Ovary (tissue), 10 donors: ENCODE measurements at regions of chr2 and their contacts with region 1.

Region 1: DNA sequence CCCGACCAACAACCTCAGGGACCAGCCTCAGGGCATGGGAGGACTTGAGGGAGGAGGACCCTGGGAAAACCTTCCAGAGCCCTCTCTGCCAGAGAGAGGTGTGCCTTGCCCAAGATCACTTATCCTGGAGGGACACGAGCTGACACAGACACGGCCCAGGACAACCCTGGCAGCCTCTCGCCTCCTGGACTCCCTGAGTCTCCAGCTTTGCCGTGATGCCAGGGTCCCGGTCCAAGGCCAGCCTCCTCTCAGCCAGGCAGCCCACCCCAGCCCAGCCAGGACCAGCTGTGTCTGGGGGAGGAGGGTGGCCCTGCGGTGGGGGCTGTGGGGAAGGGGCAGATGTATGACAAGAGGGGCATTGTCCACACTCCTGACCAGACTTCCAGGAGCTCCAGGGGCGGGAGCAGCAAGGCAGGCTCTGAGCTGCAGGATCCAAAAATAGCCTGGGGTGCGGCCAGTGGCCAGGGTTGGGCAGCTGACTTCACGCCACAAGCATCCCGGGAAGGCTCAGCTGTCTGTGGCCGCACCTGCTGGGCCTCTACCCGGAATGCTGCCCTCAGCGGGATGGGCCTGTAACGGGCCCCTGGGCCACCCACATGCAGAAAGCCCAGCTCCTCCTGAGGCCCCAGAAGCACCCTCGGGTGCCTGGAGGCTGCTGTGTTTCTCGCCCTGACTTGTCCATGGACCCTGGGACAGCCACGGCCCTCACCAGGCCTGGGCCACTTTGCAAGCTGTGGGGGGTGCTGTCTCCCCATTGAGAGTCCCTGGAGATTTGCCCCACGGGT is 65.5 kb upstream of the GPC1 start:
- DNase-seq: peak; percentile 65 to 82 (median 69)
- H3K4me3 ChIP-seq: no peak overlapping the region
- H3K27ac ChIP-seq: peak overlapping the region; percentile 22 to 62
- H3K4me1 ChIP-seq: peaks cover 17% of the 10 kb centered on the region
- H3K27me3 ChIP-seq: no peaks in the 10 kb centered on the region
- CTCF ChIP-seq: no peak
- EP300 ChIP-seq: no peak
- POLR2A ChIP-seq: no peak

Region 2: DNA sequence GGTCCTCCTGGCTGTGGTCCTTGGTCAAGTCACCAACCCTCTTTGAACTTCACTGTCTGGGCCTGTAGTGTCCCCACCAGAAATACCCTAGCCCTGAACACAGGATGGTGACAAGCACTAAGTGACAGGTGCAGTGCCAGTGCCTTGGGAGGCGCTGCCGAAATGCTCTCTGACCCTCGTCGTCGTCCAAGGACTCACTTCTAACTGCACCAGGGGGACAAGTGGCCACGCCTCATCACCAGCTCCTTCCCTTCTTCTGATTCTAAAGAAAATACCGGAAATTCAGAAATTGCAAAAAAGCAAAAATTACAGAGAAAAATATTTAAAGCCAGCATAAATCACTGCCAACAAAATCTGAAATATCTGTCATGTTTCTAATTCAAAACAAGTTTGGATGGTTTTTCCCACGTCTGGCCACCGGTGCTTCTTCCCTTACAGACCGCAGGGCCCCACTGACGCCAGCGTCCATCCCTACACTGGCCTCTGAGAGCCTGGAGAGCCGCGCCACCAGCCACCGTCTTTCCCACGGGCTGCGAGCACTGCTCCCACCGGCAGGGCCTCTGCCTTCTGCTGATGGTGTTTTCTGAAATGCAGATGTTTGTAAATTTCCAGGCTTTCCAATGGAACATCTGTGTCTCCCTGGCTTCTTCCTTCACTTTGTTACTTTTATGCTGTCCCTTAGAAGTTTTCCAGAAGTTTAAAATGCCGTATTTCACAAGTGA is 28.1 kb after region 1 on chr2:
- intact Hi-C with region 1: no loop called
- DNase-seq: peak in 3 of 5 donors; percentile 14 to 41 (median 19)
- H3K4me3 ChIP-seq: no peak overlapping the region
- H3K27ac ChIP-seq: no peak overlapping the region
- H3K4me1 ChIP-seq: no peaks in the 10 kb centered on the region
- H3K27me3 ChIP-seq: no peaks in the 10 kb centered on the region
- CTCF ChIP-seq: no peak
- EP300 ChIP-seq: no peak
- POLR2A ChIP-seq: no peak

Region 3: GRCh38 chr2:240434728-240435456 is 64.9 kb after region 1 on chr2:
- intact Hi-C with region 1: loop called in 1 of 4 experiments (anchors 5 kb)
- DNase-seq: peak; percentile 97 to 98 (median 98)
- H3K4me3 ChIP-seq: peak overlapping the region; percentile 66
- H3K27ac ChIP-seq: peak overlapping the region; percentile 79 to 91
- H3K4me1 ChIP-seq: peaks cover 17% of the 10 kb centered on the region
- H3K27me3 ChIP-seq: no peaks in the 10 kb centered on the region
- CTCF ChIP-seq: no peak
- EP300 ChIP-seq: no peak
- POLR2A ChIP-seq: peak; percentile 25